ENCODE measurements at regions of chr18 and their contacts with region 1.

Region 1: GRCh38 chr18:62584241-62585120 is 61.7 kb downstream of the ZCCHC2 start:
- DNase-seq: peak; percentile 78
- H3K4me3 ChIP-seq: no peak overlapping the region
- H3K27ac ChIP-seq: no peak overlapping the region
- H3K27me3 ChIP-seq: peaks cover 2% of the 10 kb centered on the region
- CTCF ChIP-seq: peak; percentile 99

Region 2: GRCh38 chr18:62479574-62479973 is 104.9 kb before region 1 on chr18:
- CTCF ChIA-PET with region 1: no interaction called
- POLR2A ChIA-PET with region 1: no interaction called
- DNase-seq: no peak
- H3K4me3 ChIP-seq: no peak overlapping the region
- H3K27ac ChIP-seq: no peak overlapping the region
- H3K27me3 ChIP-seq: no peaks in the 10 kb centered on the region
- CTCF ChIP-seq: no peak

Region 3: DNA sequence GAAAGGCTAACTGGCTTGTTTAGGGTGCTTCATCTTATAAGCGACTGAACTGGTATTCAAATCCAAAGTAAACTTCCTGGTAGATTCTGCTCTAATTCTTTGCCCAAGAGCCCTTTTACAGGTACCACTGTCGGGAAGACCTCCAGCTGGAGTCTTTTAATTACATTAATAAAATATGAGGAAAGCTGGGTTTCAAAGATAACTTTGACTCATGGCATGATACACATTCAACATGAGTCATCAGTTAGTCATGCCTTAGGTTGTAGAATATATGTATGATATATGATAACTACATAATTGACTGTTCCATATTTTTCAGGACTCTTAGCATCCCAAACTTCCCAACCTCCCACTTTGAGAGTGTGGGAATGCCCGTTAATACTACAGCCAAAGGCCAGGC is 29.3 kb before region 1 on chr18:
- CTCF ChIA-PET with region 1: interaction called, 20 read pairs
- POLR2A ChIA-PET with region 1: no interaction called
- DNase-seq: no peak
- H3K4me3 ChIP-seq: no peak overlapping the region
- H3K27ac ChIP-seq: no peak overlapping the region
- H3K27me3 ChIP-seq: no peaks in the 10 kb centered on the region
- CTCF ChIP-seq: no peak

Region 4: GRCh38 chr18:62697636-62698035 is 113.2 kb after region 1 on chr18:
- CTCF ChIA-PET with region 1: interaction called, 11 read pairs
- POLR2A ChIA-PET with region 1: no interaction called
- DNase-seq: no peak
- H3K4me3 ChIP-seq: no peak overlapping the region
- H3K27ac ChIP-seq: no peak overlapping the region
- H3K27me3 ChIP-seq: peaks cover 2% of the 10 kb centered on the region
- CTCF ChIP-seq: no peak

Region 5: DNA sequence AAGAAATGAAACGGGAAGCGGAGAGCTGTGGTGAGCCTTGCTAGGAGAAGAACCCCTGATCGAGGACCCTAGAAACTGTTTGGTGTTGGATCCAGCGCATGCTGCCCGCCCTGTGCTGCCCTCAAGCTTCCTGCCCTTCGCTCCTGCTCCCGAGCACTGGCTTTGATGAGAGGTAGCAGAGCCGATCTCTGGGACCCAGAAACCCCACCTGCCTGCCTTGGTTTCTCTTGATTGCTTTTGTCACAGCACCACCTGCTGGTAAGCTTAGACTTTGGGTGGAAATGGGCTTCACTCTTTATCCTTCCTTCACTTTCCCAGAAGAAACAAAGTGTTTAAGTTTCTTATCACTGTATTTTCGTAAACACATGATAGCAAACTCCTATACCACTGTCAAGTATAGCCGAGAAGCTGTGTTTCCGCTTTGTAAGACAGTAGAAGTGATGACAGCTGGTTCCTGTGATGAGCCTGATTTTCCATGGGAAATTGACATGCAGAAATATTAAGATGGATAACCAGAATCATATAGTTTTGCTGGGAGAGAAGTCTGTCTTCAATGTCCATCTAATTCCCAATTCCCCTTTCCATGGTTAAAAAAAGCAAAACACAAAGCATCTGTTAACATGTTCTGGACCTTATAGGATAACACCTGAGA is 398.2 kb after region 1 on chr18:
- CTCF ChIA-PET with region 1: interaction called, 211 read pairs
- POLR2A ChIA-PET with region 1: no interaction called
- DNase-seq: peak; percentile 11
- H3K4me3 ChIP-seq: no peak overlapping the region
- H3K27ac ChIP-seq: no peak overlapping the region
- H3K27me3 ChIP-seq: no peaks in the 10 kb centered on the region
- CTCF ChIP-seq: peak; percentile 85

Region 6: GRCh38 chr18:63016270-63016669 is 431.8 kb after region 1 on chr18:
- CTCF ChIA-PET with region 1: interaction called, 16 read pairs
- POLR2A ChIA-PET with region 1: no interaction called
- DNase-seq: peak; percentile 15
- H3K4me3 ChIP-seq: no peak overlapping the region
- H3K27ac ChIP-seq: no peak overlapping the region
- H3K27me3 ChIP-seq: peaks cover 7% of the 10 kb centered on the region
- CTCF ChIP-seq: peak; percentile 86